Calu3 (cell line): ENCODE measurements at regions of chr14 and their contacts with region 1.

Region 1: GRCh38 chr14:24817212-24818057 is 183.4 kb upstream of the GZMB start:
- DNase-seq: peak; percentile 69
- H3K4me3 Mint-ChIP-seq: peak overlapping the region; percentile 34
- H3K27ac Mint-ChIP-seq: peak overlapping the region; percentile 74
- H3K4me1 Mint-ChIP-seq: peaks cover 62% of the 10 kb centered on the region
- H3K27me3 Mint-ChIP-seq: no peaks in the 10 kb centered on the region
- CTCF ChIP-seq: no peak

Region 2: DNA sequence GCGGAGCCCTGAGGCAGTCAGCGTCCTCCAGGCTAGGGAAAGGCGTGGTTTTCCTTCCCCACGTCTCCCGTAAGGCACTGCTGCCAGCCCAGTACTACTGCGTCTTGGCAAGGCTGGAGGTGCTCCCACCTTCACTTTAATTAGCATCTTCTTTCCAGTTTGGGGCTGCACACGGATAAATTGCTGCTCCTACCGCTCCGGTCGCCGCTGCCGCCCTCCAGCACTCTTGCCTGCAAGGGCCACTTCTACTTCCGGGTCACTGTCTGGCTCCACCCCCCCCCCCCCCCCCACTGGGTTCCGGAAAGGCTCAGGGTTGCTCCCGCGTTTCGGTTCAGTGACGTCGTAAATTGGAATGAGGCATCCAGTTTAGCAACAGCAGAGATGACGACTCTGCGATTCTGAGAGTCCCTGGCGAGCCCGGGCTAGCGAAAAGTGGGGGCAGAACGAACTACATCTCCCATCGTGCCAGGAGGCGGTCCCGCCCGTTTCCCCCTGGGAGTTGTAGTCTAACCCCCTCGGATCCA is 585.3 kb before region 1 on chr14 and contains the start of gene NEDD8:
- CTCF ChIA-PET with region 1: no interaction called
- intact Hi-C with region 1: no loop called
- DNase-seq: peak; percentile 87
- H3K4me3 Mint-ChIP-seq: peak within 1 kb of the TSS; percentile 83
- H3K27ac Mint-ChIP-seq: peak within 1 kb of the TSS; percentile 67
- H3K4me1 Mint-ChIP-seq: peaks cover 19% of the 10 kb centered on the region
- H3K27me3 Mint-ChIP-seq: no peaks in the 10 kb centered on the region
- CTCF ChIP-seq: no peak
- total RNA-seq, gene NEDD8: 192 and 198 TPM in 2 replicates

Region 3: GRCh38 chr14:24695265-24696241 is 121.9 kb before region 1 on chr14:
- CTCF ChIA-PET with region 1: no interaction called
- intact Hi-C with region 1: no loop called
- DNase-seq: no peak
- H3K4me3 Mint-ChIP-seq: no peak overlapping the region
- H3K27ac Mint-ChIP-seq: no peak overlapping the region
- H3K4me1 Mint-ChIP-seq: no peaks in the 10 kb centered on the region
- H3K27me3 Mint-ChIP-seq: peaks cover 12% of the 10 kb centered on the region
- CTCF ChIP-seq: no peak

Region 4: DNA sequence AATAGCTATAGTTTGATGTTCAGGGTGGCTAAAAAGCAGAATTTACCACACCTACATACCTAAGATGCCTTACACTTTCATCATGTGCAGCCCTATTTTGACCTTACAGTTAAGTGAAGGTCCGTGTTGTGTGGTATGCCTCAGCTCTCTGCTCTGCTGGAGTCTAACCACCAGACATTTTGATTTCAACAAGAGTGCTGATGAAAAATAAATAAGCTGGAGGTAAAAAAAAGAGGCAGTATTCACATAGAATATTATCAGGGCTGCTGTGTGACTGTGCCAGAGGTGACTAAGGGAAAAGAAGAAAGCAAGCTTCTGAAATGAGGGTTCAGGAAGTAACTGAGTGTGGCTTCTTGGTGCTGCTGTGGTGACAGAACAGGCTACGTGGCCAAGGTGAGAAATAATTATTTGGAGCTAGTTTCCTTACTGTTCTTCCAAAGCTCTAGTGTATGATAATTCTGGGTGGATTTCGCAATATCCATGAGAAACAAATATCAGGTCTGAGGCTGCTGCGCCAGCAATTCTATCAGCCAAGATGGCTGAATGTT is 43.7 kb after region 1 on chr14:
- CTCF ChIA-PET with region 1: no interaction called
- intact Hi-C with region 1: loop called (anchors 5 kb)
- DNase-seq: peak; percentile 33
- H3K4me3 Mint-ChIP-seq: peak overlapping the region; percentile 71
- H3K27ac Mint-ChIP-seq: peak overlapping the region; percentile 98
- H3K4me1 Mint-ChIP-seq: peaks cover 30% of the 10 kb centered on the region
- H3K27me3 Mint-ChIP-seq: no peaks in the 10 kb centered on the region
- CTCF ChIP-seq: no peak

Region 5: GRCh38 chr14:24875991-24876878 is 58.8 kb after region 1 on chr14:
- CTCF ChIA-PET with region 1: no interaction called
- intact Hi-C with region 1: loop called (anchors 5 kb)
- DNase-seq: no peak
- H3K4me3 Mint-ChIP-seq: no peak overlapping the region
- H3K27ac Mint-ChIP-seq: peak overlapping the region; percentile 16
- H3K4me1 Mint-ChIP-seq: peaks cover 58% of the 10 kb centered on the region
- H3K27me3 Mint-ChIP-seq: no peaks in the 10 kb centered on the region
- CTCF ChIP-seq: no peak

Region 6: GRCh38 chr14:24911324-24912109 is 94.1 kb after region 1 on chr14:
- CTCF ChIA-PET with region 1: no interaction called
- intact Hi-C with region 1: loop called (anchors 5 kb)
- DNase-seq: no peak
- H3K4me3 Mint-ChIP-seq: no peak overlapping the region
- H3K27ac Mint-ChIP-seq: peak overlapping the region; percentile 1
- H3K4me1 Mint-ChIP-seq: peaks cover 35% of the 10 kb centered on the region
- H3K27me3 Mint-ChIP-seq: no peaks in the 10 kb centered on the region
- CTCF ChIP-seq: no peak

Region 7: DNA sequence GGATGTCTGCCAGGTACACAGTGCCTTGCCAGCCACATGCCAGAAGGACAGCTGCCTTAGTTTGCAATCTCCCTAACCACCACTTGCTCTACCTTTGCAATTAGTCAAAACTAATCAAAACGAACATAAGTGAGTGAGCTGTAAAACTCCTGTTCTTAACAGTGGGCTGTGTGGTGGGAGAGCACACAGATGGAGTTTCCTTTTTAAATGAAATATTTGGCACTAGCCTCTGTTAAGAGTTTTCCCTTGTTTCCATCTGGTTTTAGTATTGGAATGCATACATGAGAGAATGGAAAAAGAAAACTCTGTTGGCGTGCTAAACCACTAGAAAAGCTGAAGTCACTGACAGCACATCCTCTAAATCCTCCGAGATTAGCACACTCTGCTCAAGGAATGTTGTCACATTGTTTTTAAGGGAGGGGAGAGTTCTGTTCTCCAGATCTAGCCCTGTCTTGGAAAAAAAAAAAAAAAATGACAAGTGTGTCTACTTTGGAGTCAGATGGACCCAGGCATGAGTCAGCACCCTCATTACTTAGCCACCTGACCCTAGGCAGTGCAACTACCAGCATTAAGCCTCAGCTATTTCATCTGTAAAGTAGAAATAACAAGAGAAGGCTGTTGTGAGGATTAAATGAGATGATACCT is 148.6 kb after region 1 on chr14:
- CTCF ChIA-PET with region 1: no interaction called
- intact Hi-C with region 1: no loop called
- DNase-seq: peak; percentile 20
- H3K4me3 Mint-ChIP-seq: no peak overlapping the region
- H3K27ac Mint-ChIP-seq: no peak overlapping the region
- H3K4me1 Mint-ChIP-seq: peaks cover 13% of the 10 kb centered on the region
- H3K27me3 Mint-ChIP-seq: no peaks in the 10 kb centered on the region
- CTCF ChIP-seq: no peak

Region 8: GRCh38 chr14:24978862-24979724 is 161.7 kb after region 1 on chr14:
- CTCF ChIA-PET with region 1: no interaction called
- intact Hi-C with region 1: loop called (anchors 1 kb)
- DNase-seq: peak; percentile 5
- H3K4me3 Mint-ChIP-seq: peak overlapping the region; percentile 1
- H3K27ac Mint-ChIP-seq: peak overlapping the region; percentile 41
- H3K4me1 Mint-ChIP-seq: peaks cover 51% of the 10 kb centered on the region
- H3K27me3 Mint-ChIP-seq: no peaks in the 10 kb centered on the region
- CTCF ChIP-seq: no peak

Region 9: GRCh38 chr14:25557466-25557865 is 740.0 kb after region 1 on chr14:
- CTCF ChIA-PET with region 1: no interaction called
- intact Hi-C with region 1: no loop called
- DNase-seq: no peak
- H3K4me3 Mint-ChIP-seq: no peak overlapping the region
- H3K27ac Mint-ChIP-seq: no peak overlapping the region
- H3K4me1 Mint-ChIP-seq: no peaks in the 10 kb centered on the region
- H3K27me3 Mint-ChIP-seq: no peaks in the 10 kb centered on the region
- CTCF ChIP-seq: no peak